ENCODE measurements at regions of chr16 and their contacts with region 1.

Region 1: DNA sequence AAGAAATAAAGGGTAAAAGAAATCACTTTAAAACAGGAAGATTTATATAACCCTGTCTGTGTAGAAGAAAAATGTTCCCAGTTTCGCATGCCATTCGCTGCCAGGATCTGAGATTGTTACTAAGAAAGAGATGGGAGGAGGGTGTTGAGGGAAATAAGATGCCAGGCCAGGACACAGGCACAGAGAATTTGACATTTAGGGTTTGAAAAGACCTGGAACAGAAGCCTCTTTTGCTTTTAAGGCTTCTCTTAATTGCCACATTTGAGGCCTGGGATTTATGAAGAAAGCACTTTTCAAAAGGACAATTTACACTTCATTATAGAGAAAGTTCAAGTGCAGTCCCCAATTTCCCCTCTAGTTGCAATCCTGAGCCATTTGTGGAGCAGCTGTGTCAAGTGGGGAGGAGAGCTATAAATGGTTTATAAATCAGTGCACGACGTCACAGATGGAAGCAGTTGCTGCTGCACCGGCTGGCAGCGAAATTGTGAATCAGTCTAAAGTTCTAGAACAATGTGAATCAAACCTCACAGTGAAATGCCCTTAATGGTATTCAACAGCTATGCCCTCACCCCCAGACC is 26.5 kb upstream of the C16orf87 start:
- DNase-seq: no peak
- CTCF ChIP-seq: no peak

Region 2: GRCh38 chr16:46920402-46921068 is 63.1 kb after region 1 on chr16:
- in situ Hi-C with region 1: loop called (anchors 5 kb)
- DNase-seq: no peak
- CTCF ChIP-seq: no peak

Region 3: DNA sequence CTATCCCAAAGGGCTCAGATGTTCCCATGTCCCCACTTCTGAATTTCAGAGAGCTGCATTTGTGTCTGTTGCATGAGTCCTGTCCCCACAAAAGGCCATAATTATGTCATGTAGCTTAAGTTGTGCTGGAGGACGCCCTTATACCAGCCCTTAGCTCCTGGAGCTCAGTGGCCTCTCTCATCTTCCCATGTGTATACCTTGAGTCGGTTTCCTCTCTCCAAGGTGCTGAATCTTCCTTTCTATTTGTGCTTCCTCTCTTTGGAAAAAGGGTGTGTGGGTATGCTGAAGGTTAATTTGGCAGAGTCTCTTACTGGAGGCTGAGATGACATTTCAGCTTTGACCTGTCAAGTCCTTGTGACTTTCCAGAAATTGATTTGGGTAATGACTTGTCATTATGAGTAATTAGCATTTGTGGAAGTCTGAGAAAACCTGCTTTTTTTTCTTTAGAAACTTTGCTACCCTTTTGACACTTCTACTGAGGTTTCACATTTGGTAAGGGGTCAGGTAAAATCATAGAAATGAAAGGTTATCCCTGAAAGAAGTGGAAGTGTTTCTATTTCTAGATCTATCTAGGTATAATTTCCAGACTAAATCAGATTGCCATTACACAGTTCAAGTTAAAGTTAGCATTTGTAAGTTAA is 1113.0 kb after region 1 on chr16:
- in situ Hi-C with region 1: no loop called
- DNase-seq: no peak
- CTCF ChIP-seq: no peak

Measured in GM13977 (cell line).